Breast epithelium (tissue), 4 donors: ENCODE measurements at regions of chr11 and their contacts with region 1.

Region 1: DNA sequence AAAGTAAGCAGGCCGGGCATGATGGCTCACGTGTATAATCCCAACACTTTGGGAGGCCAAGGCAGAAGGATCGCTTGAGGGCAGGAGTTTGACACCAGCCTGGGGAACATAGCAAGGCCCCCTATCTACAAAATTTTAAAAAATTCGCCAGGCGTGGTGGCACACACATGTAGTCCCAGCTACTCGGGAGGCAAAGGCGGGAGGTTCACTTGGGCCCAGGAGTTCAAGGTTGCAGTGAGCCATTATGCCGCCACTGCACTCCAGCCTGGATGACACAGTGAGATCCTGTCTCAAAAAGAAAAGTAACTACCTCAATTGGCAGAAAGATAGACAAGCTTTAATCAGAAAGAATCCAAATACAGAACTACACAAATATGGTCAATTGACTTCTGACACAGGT is 31.0 kb downstream of the CADM1 start:
- DNase-seq: no peak
- H3K4me3 ChIP-seq: no peak overlapping the region
- H3K27ac ChIP-seq: no peak overlapping the region
- H3K4me1 ChIP-seq: no peaks in the 10 kb centered on the region
- H3K27me3 ChIP-seq: no peaks in the 10 kb centered on the region
- CTCF ChIP-seq: no peak
- POLR2A ChIP-seq: no peak

Region 2: GRCh38 chr11:115439385-115439784 is 33.8 kb before region 1 on chr11:
- intact Hi-C with region 1: no loop called
- DNase-seq: no peak
- H3K4me3 ChIP-seq: no peak overlapping the region
- H3K27ac ChIP-seq: no peak overlapping the region
- H3K4me1 ChIP-seq: no peaks in the 10 kb centered on the region
- H3K27me3 ChIP-seq: no peaks in the 10 kb centered on the region
- CTCF ChIP-seq: no peak
- POLR2A ChIP-seq: no peak

Region 3: GRCh38 chr11:115455613-115456012 is 17.6 kb before region 1 on chr11:
- intact Hi-C with region 1: loop called (anchors 2 kb)
- DNase-seq: no peak
- H3K4me3 ChIP-seq: no peak overlapping the region
- H3K27ac ChIP-seq: no peak overlapping the region
- H3K4me1 ChIP-seq: no peaks in the 10 kb centered on the region
- H3K27me3 ChIP-seq: no peaks in the 10 kb centered on the region
- CTCF ChIP-seq: no peak
- POLR2A ChIP-seq: no peak